Common myeloid progenitor, CD34-positive (primary cell): ENCODE measurements at regions of chr17 and their contacts with region 1.

Region 1: DNA sequence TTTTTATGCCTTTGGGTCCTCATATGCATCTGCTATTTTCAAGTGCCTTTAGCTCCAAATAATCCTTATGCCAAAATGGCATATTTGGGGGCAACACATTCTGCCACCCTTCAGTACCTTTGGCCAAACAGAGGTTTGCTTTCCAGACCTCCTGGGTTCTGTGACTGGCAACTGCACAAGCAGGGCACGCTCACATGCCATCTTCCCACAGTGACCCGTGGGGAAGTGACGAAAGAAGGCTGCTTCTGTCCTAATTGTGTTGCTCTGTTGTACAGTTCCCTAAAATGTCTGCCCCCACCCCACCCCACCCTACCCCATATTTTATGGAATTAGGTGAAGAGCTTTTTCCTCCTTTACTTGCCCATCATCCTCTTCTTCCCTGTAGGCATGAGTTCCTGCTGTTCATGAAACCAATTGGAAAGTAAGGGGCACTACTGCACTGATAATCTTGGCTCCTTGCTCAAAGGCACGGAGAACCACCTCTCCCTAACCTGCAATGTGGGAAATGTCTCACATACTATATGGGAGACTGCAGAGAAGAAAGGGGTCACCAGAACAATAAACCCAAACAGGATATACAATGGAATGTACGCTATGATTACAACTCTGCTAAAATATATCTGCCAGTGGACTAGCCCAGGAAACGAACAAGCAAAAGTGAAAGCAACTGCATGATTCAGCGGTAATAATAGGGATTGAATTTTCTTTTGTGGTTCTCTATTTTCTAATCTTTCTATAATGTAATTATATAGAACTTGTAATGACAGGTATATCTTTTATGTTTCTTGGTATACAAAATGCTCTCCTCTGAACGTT is 3.3 kb upstream of the SLFN12L start:
- DNase-seq: peak; percentile 80 to 94 (median 91)
- H3K4me3 ChIP-seq: peak overlapping the region in 6 of 7 experiments; percentile 49 to 80 (median 57)
- H3K27ac ChIP-seq: peak overlapping the region; percentile 59 to 85
- H3K4me1 ChIP-seq: peaks cover 36 to 76% (median 62%) of the 10 kb centered on the region in 4 experiments
- H3K27me3 ChIP-seq: no peaks in the 10 kb centered on the region

Region 2: GRCh38 chr17:35312790-35313711 is 227.7 kb before region 1 on chr17:
- CTCF ChIA-PET with region 1: interaction called, 98 read pairs
- POLR2A ChIA-PET with region 1: interaction called, 3 read pairs
- DNase-seq: peak; percentile 81 to 90 (median 89)
- H3K4me3 ChIP-seq: peak overlapping the region; percentile 29 to 80 (median 64)
- H3K27ac ChIP-seq: no peak overlapping the region
- H3K4me1 ChIP-seq: peaks cover 0 to 15% (median 13%) of the 10 kb centered on the region in 4 experiments
- H3K27me3 ChIP-seq: peaks cover 0 to 10% (median 4%) of the 10 kb centered on the region in 5 experiments

Region 3: GRCh38 chr17:35555695-35556094 is 14.9 kb after region 1 on chr17:
- CTCF ChIA-PET with region 1: interaction called, 26 read pairs
- POLR2A ChIA-PET with region 1: interaction called, 4 read pairs
- DNase-seq: peak; percentile 63 to 81 (median 81)
- H3K4me3 ChIP-seq: no peak overlapping the region
- H3K27ac ChIP-seq: no peak overlapping the region
- H3K4me1 ChIP-seq: peaks cover 21 to 50% (median 43%) of the 10 kb centered on the region in 4 experiments
- H3K27me3 ChIP-seq: no peaks in the 10 kb centered on the region